Mammary epithelial cell (primary cell): ENCODE measurements at regions of chr2 and their contacts with region 1.

Region 1: GRCh38 chr2:217501887-217502286 is 500.9 kb downstream of the TNS1 start:
- DNase-seq: no peak
- H3K4me3 ChIP-seq: no peak overlapping the region
- H3K27ac ChIP-seq: no peak overlapping the region
- H3K4me1 ChIP-seq: no peaks in the 10 kb centered on the region
- H3K27me3 ChIP-seq: no peaks in the 10 kb centered on the region
- CTCF ChIP-seq: no peak

Region 2: DNA sequence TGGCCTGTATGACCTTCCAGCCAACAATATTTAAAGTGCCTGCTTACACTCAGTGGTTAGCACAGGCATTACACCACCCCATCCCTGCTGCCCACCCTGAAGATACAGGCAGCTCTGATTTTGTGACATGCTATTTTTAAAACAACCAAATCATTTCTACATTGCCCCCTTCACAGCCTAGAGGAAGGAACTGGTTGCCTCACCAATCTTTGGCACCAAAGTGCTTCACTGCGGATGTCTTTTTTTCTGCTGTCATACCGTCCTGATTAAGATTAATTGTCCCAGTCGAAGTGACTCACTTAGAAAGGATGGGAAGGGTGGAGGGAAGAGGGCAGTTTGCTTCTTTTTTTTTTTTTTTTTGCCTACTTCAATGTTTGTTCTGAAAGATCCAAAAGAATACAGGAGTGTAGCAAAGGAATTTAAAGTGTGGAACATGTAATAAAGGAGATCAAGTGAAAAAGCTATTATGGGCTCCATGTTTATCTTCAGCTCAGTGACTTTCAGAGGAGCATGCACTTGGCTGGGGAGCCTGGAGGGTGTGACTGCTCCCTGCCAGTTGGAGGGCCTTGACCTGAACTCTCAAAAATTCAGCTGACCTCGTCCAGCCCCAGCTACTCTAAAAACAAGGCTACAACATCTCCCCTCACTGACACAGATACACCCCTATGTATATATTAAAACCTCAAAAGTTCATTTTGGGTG is 141.0 kb before region 1 on chr2:
- CTCF ChIA-PET with region 1: no interaction called
- dilution Hi-C with region 1: no loop called
- in situ Hi-C with region 1: loop called in 1 of 2 experiments (anchors 10 kb)
- intact Hi-C with region 1: no loop called
- DNase-seq: peak; percentile 53
- H3K4me3 ChIP-seq: no peak overlapping the region
- H3K27ac ChIP-seq: no peak overlapping the region
- H3K4me1 ChIP-seq: peaks cover 11% of the 10 kb centered on the region
- H3K27me3 ChIP-seq: no peaks in the 10 kb centered on the region
- CTCF ChIP-seq: no peak